Activated CD8-positive, alpha-beta T cell treated with anti-CD3 and anti-CD28 coated beads for 36 hours (primary cell): ENCODE measurements at regions of chr12 and their contacts with region 1.

Region 1: DNA sequence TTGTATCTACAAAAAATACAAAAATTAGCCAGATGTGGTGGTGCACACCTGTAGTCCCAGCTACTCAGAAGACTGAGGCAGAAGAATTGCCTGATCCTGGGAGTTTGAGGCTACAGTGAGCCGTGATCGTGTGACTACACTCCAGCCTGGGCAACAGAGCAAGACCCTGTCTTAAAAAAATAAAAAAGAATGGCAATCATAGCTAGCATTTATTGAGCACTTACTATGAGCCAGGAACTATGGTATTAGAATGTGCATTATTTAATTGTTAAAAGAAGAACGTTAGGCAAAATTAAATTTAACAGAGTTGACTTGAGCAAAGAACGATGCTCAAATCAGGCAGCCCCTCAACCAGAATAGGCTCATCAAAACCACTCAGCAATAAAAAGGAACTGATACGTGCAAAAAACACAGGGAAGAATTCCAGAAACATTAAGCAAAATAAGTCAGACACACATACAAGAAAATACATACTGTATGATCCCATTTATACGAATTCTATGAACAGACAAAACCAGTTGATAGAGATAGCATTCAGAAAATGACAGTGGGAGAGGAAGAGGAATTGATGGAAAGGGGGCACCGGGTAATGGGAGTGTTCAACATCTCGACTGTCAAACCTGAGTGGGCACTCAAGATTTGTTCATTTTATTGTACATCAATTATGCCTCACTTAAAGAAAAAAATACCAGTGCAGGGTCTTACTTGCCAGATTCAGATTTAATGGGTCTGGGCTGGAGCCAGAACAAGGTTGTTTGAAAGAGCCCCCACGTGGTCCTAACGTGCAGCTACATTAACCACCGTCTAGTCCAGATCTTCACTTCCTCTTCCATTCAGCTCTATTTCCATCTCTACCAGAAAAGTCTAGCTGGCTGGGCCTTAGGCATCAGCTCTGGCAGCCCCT is 8.0 kb downstream of the SCNN1A start:
- DNase-seq: peak; percentile 70
- ATAC-seq: peak; percentile 67
- H3K4me3 Mint-ChIP-seq: peak overlapping the region; percentile 12
- H3K27ac Mint-ChIP-seq: peak overlapping the region; percentile 80
- H3K4me1 Mint-ChIP-seq: peaks cover 35% of the 10 kb centered on the region
- H3K27me3 Mint-ChIP-seq: no peaks in the 10 kb centered on the region
- CTCF ChIP-seq: peak; percentile 29

Region 2: GRCh38 chr12:6341417-6342139 is 25.7 kb before region 1 on chr12 and contains the start of gene TNFRSF1A:
- CTCF ChIA-PET with region 1: interaction called, 28 read pairs
- POLR2A ChIA-PET with region 1: interaction called, 7 read pairs
- intact Hi-C with region 1: no loop called
- DNase-seq: peak; percentile 62
- ATAC-seq: peak; percentile 27
- H3K4me3 Mint-ChIP-seq: no peak within 1 kb of the TSS
- H3K27ac Mint-ChIP-seq: no peak within 1 kb of the TSS
- H3K4me1 Mint-ChIP-seq: peaks cover 40% of the 10 kb centered on the region
- H3K27me3 Mint-ChIP-seq: no peaks in the 10 kb centered on the region
- CTCF ChIP-seq: no peak
- total RNA-seq, gene TNFRSF1A: 40.6 TPM

Region 3: GRCh38 chr12:6355491-6356371 is 11.6 kb before region 1 on chr12:
- CTCF ChIA-PET with region 1: interaction called, 11 read pairs
- POLR2A ChIA-PET with region 1: interaction called, 5 read pairs
- intact Hi-C with region 1: no loop called
- DNase-seq: no peak
- ATAC-seq: no peak
- H3K4me3 Mint-ChIP-seq: no peak overlapping the region
- H3K27ac Mint-ChIP-seq: no peak overlapping the region
- H3K4me1 Mint-ChIP-seq: peaks cover 13% of the 10 kb centered on the region
- H3K27me3 Mint-ChIP-seq: no peaks in the 10 kb centered on the region
- CTCF ChIP-seq: no peak